PC-3 (cell line): ENCODE measurements at regions of chr17 and their contacts with region 1.

Region 1: DNA sequence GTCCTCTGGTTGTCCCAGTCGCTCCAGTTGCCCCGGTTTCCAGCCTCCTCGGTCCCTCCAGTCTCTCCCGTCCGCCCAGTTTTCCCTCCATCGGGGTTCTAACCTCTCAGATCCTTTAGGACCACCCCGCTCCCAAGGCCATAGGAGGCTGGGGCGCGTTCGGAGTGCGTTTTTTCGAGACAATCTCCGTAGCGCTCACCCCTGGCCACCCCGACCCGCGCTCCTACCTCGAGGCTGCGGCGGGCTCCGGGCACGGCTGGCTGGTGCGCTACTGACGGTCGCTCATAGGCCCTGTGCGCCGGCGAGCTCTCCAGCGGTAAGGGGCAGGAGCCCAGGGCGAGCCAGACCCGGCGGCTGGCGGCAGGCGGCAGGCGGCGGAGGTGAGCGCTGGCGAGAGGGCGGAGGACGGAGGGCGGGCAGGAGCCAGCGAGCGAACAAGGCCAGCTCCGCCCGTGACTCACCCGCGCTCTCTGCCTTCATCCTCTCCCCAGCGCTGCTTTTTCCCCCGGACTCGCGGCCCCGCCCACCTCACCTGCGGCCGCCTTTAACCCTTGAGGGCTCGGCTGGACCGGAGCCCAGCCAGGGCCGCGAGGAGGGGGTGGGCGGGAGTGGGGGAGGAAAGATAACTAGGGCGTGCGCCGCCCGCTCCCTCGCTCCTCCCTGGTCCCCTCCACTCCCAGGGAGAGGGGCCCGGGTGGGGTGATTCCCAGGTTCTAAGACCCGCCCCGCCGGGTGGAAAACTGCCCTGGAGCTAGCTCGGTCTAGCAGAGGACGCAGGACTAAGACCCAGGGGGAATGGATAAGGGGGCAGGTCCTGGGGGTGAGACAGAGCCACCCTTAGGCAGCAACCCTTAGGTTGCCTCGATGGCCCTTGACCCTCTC is at the start of gene SP6:
- DNase-seq: peak; percentile 93
- ATAC-seq: peak; percentile 97
- H3K4me3 ChIP-seq: peak within 1 kb of the TSS; percentile 88
- H3K27ac ChIP-seq: no peak within 1 kb of the TSS
- H3K4me1 ChIP-seq: peaks cover 16% of the 10 kb centered on the region
- H3K27me3 ChIP-seq: peaks cover 13% of the 10 kb centered on the region
- CTCF ChIP-seq: peak; percentile 38; the same call in 1 of the 2 replicates
- total RNA-seq, gene SP6: 3.1 and 3.9 TPM in 2 replicates

Region 2: GRCh38 chr17:47698749-47699535 is 152.0 kb before region 1 on chr17:
- CTCF ChIA-PET with region 1: no interaction called
- POLR2A ChIA-PET with region 1: no interaction called
- intact Hi-C with region 1: no loop called
- DNase-seq: peak; percentile 75
- ATAC-seq: peak; percentile 26
- H3K4me3 ChIP-seq: no peak overlapping the region
- H3K27ac ChIP-seq: no peak overlapping the region
- H3K4me1 ChIP-seq: peaks cover 7% of the 10 kb centered on the region; the same call in 1 of the 2 replicates
- H3K27me3 ChIP-seq: no peaks in the 10 kb centered on the region
- CTCF ChIP-seq: peak; percentile 99

Region 3: DNA sequence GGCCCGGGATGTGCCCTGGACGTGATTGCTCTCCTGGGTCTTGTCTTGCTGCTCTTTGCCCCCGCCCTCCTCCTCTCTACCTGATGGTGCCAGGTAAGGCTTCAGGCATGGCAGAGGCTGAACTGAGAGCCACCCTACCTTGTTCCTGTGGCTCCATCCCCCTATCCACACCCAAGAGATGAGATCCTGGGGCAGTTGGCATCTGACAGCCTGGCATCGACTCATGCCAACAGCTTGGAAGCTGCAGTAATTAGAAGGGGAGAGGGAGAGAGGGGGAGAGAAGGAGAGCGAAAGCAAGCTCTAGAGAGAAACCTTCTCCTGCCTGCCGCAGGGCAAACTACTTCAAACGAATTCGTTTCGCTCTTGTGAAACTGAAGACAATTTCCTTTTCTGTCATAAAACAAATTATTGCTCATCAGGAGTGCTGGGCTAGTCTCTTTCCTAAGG is 13.9 kb after region 1 on chr17:
- CTCF ChIA-PET with region 1: interaction called, 4 read pairs
- POLR2A ChIA-PET with region 1: no interaction called
- intact Hi-C with region 1: loop called (anchors 2 kb)
- DNase-seq: peak; percentile 89
- ATAC-seq: peak; percentile 69
- H3K4me3 ChIP-seq: peak overlapping the region; percentile 49
- H3K27ac ChIP-seq: peak overlapping the region; percentile 77
- H3K4me1 ChIP-seq: peaks cover 28% of the 10 kb centered on the region
- H3K27me3 ChIP-seq: no peaks in the 10 kb centered on the region
- CTCF ChIP-seq: no peak

Region 4: DNA sequence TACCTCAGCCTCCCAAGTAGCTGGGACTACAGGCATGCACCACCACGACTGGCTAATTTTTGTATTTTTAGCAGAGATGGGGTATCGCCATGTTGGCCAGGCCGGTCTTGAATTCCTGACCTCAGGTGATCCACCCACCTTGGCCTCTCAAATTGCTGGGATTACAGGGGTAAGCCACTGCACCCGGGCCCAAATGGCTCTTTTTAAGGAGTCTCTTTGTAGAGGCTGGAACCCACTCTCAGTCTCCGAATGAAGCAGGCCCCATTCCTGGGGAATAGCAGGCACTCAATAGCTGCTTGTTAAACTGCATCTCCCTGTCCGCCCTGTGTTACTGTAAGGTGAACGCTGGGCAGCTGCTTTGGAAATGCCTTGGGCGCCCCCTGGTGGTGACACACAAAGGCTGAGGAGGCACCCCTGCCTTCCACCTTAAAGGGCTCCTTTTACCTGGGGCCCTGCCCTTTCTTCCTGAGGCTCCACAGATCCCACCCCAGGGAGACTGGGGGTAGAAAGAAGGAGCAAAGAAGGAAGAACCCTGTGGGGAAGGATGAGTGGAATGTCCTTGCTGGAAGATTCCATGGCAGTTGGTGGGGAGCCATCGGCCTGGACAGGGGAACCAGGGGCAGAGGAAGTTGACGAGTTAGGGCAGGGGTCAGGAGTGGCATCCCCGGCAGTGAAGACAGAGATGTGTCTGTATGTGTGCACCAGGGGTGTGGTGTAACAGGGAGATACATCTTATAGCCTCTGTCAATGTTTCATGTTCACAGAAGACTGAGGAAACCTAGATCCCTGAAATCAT is 39.0 kb after region 1 on chr17:
- CTCF ChIA-PET with region 1: interaction called, 16 read pairs
- POLR2A ChIA-PET with region 1: no interaction called
- intact Hi-C with region 1: no loop called
- DNase-seq: peak; percentile 93
- ATAC-seq: peak; percentile 99
- H3K4me3 ChIP-seq: no peak overlapping the region
- H3K27ac ChIP-seq: no peak overlapping the region
- H3K4me1 ChIP-seq: peaks cover 17% of the 10 kb centered on the region
- H3K27me3 ChIP-seq: no peaks in the 10 kb centered on the region
- CTCF ChIP-seq: peak; percentile 99

Region 5: DNA sequence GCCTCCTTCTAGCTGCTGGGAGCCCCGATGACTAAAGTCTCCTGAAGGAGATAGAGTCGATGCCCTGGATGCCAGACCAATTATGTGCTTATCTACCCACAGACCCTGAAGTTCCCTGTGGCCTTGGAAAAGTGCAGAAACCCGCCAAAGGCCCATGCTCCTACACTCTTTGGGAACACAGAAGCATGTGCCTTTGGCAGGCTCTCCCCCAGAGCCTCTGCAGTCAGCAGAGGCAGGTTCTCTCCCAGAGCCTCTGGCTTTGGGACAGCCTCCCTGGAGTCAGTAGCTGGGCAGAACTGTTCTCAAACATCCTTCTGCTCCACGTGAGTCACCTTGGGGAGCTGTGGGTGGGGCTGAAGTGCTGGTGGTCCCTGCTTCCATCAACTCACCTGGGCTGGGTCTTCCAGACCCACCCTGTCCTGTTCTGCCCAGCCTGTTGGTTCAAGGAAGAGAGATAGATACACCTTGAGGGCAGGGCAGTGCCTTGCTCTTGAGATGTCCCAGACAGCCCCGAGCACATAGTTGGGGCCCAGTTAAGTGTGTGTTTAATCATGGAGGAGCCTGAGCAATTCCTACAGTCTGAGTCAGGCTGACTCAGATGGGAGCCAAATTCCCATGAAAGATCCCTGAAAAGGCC is 116.8 kb after region 1 on chr17:
- CTCF ChIA-PET with region 1: no interaction called
- POLR2A ChIA-PET with region 1: no interaction called
- intact Hi-C with region 1: no loop called
- DNase-seq: peak; percentile 98
- ATAC-seq: peak; percentile 59
- H3K4me3 ChIP-seq: no peak overlapping the region
- H3K27ac ChIP-seq: peak overlapping the region; percentile 92
- H3K4me1 ChIP-seq: peaks cover 49% of the 10 kb centered on the region
- H3K27me3 ChIP-seq: no peaks in the 10 kb centered on the region
- CTCF ChIP-seq: no peak